ENCODE measurements at regions of chrX and their contacts with region 1.

Region 1: GRCh38 chrX:9995855-9996339 is 28.7 kb downstream of the CLDN34 start:
- DNase-seq: peak; percentile 79
- ATAC-seq: peak; percentile 50
- H3K4me3 Mint-ChIP-seq: no peak overlapping the region
- H3K27ac Mint-ChIP-seq: no peak overlapping the region
- H3K4me1 Mint-ChIP-seq: peaks cover 17% of the 10 kb centered on the region
- H3K27me3 Mint-ChIP-seq: no peaks in the 10 kb centered on the region
- CTCF ChIP-seq: peak; percentile 84

Region 2: GRCh38 chrX:9885150-9885549 is 110.7 kb before region 1 on chrX:
- CTCF ChIA-PET with region 1: interaction called, 4 read pairs
- POLR2A ChIA-PET with region 1: no interaction called
- intact Hi-C with region 1: loop called (anchors 5 kb)
- DNase-seq: peak; percentile 75
- ATAC-seq: peak; percentile 65
- H3K4me3 Mint-ChIP-seq: no peak overlapping the region
- H3K27ac Mint-ChIP-seq: no peak overlapping the region
- H3K4me1 Mint-ChIP-seq: no peaks in the 10 kb centered on the region
- H3K27me3 Mint-ChIP-seq: peaks cover 7% of the 10 kb centered on the region
- CTCF ChIP-seq: peak; percentile 56

Region 3: GRCh38 chrX:9948406-9948805 is 47.5 kb before region 1 on chrX:
- CTCF ChIA-PET with region 1: no interaction called
- POLR2A ChIA-PET with region 1: no interaction called
- intact Hi-C with region 1: no loop called
- DNase-seq: no peak
- ATAC-seq: no peak
- H3K4me3 Mint-ChIP-seq: no peak overlapping the region
- H3K27ac Mint-ChIP-seq: no peak overlapping the region
- H3K4me1 Mint-ChIP-seq: peaks cover under 1% of the 10 kb centered on the region
- H3K27me3 Mint-ChIP-seq: peaks cover 24% of the 10 kb centered on the region
- CTCF ChIP-seq: no peak

Region 4: GRCh38 chrX:10014462-10015356 is 18.8 kb after region 1 on chrX:
- CTCF ChIA-PET with region 1: interaction called, 11 read pairs
- POLR2A ChIA-PET with region 1: interaction called, 6 read pairs
- intact Hi-C with region 1: no loop called
- DNase-seq: peak; percentile 68
- ATAC-seq: peak; percentile 87
- H3K4me3 Mint-ChIP-seq: peak overlapping the region; percentile 63
- H3K27ac Mint-ChIP-seq: peak overlapping the region; percentile 77
- H3K4me1 Mint-ChIP-seq: peaks cover 46% of the 10 kb centered on the region
- H3K27me3 Mint-ChIP-seq: peaks cover 4% of the 10 kb centered on the region
- CTCF ChIP-seq: no peak

Region 5: DNA sequence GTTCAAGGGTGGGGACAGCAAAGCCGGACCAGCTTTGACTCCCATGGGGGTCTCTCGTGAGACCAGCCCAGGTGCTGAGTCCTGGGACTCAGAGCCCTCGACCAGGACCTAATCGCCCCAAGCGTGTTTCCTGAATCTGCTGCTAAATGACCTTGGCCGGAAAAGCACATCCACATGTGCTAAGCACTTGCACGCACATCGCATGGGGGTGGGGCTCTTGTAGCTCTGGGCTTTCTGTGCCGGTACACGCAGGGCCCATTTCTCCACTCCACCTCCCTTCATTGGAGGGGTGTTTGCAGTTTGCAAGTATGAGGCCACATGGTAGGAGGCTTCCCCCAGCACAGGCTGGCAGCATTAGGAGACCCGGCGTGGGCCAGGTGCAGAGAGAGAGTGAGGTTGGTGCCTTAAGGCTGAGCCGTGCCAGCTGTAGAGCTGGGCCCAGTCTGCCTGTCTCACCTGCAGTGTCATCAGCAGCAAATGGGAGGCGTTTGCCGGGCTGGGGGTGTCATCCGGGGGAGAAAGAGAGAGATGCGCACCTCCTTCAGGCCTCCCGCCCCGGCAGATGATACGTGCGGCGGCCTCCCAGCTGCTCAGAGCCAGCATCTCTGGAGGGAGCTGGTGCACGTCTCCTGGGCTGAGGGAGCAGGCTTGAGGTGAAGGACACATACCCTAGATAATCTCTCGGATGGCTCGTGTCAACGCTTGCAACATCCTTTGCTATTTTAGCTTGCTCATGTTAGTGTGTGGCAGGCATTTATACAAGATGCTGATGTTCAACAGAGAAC is 115.7 kb after region 1 on chrX:
- CTCF ChIA-PET with region 1: interaction called, 244 read pairs
- POLR2A ChIA-PET with region 1: interaction called, 15 read pairs
- intact Hi-C with region 1: no loop called
- DNase-seq: peak; percentile 78
- ATAC-seq: peak; percentile 68
- H3K4me3 Mint-ChIP-seq: peak overlapping the region; percentile 75
- H3K27ac Mint-ChIP-seq: peak overlapping the region; percentile 99
- H3K4me1 Mint-ChIP-seq: peaks cover 70% of the 10 kb centered on the region
- H3K27me3 Mint-ChIP-seq: no peaks in the 10 kb centered on the region
- CTCF ChIP-seq: no peak

Measured in activated CD8-positive, alpha-beta T cell treated with anti-CD3 and anti-CD28 coated beads for 36 hours (primary cell).